Activated CD8-positive, alpha-beta T cell treated with anti-CD3 and anti-CD28 coated beads, Interleukin-2, amount 10 ng/mL, durations not matched to agents 7 days and 5 days (primary cell): ENCODE measurements at regions of chr7 and their contacts with region 1.

Region 1: GRCh38 chr7:100126931-100127865 is at the start of gene MBLAC1:
- DNase-seq: peak; percentile 95
- ATAC-seq: peak; percentile 72
- H3K4me3 Mint-ChIP-seq: peak within 1 kb of the TSS; percentile 98
- H3K27ac Mint-ChIP-seq: peak within 1 kb of the TSS; percentile 100
- H3K4me1 Mint-ChIP-seq: peaks cover 49% of the 10 kb centered on the region
- H3K27me3 Mint-ChIP-seq: no peaks in the 10 kb centered on the region
- total RNA-seq, gene MBLAC1: 4.3 to 5.7 TPM

Region 2: GRCh38 chr7:100148559-100149350 is 21.6 kb after region 1 on chr7 and contains the start of gene LAMTOR4:
- CTCF ChIA-PET with region 1: interaction called, 141 read pairs
- POLR2A ChIA-PET with region 1: interaction called, 6 read pairs
- DNase-seq: peak; percentile 100
- ATAC-seq: peak; percentile 99
- H3K4me3 Mint-ChIP-seq: peak within 1 kb of the TSS; percentile 96
- H3K27ac Mint-ChIP-seq: peak within 1 kb of the TSS; percentile 97
- H3K4me1 Mint-ChIP-seq: peaks cover 42% of the 10 kb centered on the region
- H3K27me3 Mint-ChIP-seq: no peaks in the 10 kb centered on the region
- total RNA-seq, gene LAMTOR4: 134 to 143 TPM

Region 3: DNA sequence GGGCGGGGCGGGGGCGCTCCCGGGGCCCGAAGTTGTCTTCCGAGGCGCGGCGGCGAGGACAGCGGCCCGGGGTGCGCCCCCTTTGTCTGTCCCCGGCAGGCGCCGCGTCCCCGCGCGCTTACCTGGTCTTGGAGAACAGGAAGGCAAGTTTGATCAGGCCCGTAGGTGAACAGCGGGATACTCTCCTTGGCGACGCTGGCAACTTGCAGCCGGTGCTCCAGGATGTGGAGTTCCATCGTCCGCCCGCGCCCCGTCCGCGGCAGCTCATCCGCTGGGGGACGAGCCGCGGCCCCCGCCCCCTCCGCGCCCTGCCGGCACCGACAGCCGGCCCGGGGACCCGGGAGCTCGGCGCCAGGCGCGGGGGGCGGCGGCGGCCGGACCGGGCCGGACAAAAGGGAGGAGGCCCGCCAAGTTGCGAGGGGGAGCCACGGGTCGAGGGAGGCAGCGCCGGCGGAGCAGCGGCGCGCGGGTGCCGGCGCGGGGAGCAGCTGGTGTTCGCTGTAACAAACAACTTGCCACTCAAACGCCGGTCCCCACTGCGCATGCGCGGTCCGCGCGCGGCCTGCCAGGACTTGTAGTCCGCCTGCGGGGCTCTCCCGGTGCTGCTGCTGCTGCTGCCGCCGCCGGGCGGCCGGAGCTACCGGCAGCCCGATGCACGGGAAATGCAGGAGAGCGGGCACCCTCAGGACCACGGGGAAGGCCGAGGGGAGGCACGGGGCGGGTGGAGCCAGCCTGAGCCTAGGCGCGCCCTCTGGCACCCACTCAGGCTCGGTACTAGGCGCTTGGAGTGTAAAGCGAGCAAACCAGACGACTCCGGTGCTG is 144.7 kb after region 1 on chr7:
- CTCF ChIA-PET with region 1: no interaction called
- POLR2A ChIA-PET with region 1: no interaction called
- DNase-seq: peak; percentile 99
- ATAC-seq: peak; percentile 95
- H3K4me3 Mint-ChIP-seq: peak overlapping the region; percentile 73
- H3K27ac Mint-ChIP-seq: peak overlapping the region; percentile 69
- H3K4me1 Mint-ChIP-seq: peaks cover 22% of the 10 kb centered on the region
- H3K27me3 Mint-ChIP-seq: no peaks in the 10 kb centered on the region